Upper lobe of right lung (tissue), 1 donor: ENCODE measurements at regions of chr3 and their contacts with region 1.

Region 1: GRCh38 chr3:187164885-187165543 is 25.7 kb upstream of the RPL39L start:
- DNase-seq: no peak
- ATAC-seq: peak; percentile 79
- H3K4me3 ChIP-seq: no peak overlapping the region
- H3K27ac ChIP-seq: no peak overlapping the region
- H3K4me1 ChIP-seq: no peaks in the 10 kb centered on the region
- H3K27me3 ChIP-seq: no peaks in the 10 kb centered on the region
- CTCF ChIP-seq: peak; percentile 75

Region 2: GRCh38 chr3:187112934-187113793 is 51.9 kb before region 1 on chr3:
- intact Hi-C with region 1: loop called (anchors 5 kb)
- DNase-seq: no peak
- ATAC-seq: no peak
- H3K4me3 ChIP-seq: no peak overlapping the region
- H3K27ac ChIP-seq: no peak overlapping the region
- H3K4me1 ChIP-seq: no peaks in the 10 kb centered on the region
- H3K27me3 ChIP-seq: no peaks in the 10 kb centered on the region
- CTCF ChIP-seq: peak; percentile 66